ENCODE measurements at regions of chr15 and their contacts with region 1.

Region 1: GRCh38 chr15:62254137-62254934 is 89.3 kb upstream of the C2CD4B start:
- DNase-seq: peak; percentile 56 to 64
- ATAC-seq: peak; percentile 67 to 93
- H3K4me3 ChIP-seq: no peak overlapping the region
- H3K27ac ChIP-seq: no peak overlapping the region
- H3K4me1 ChIP-seq: no peaks in the 10 kb centered on the region
- CTCF ChIP-seq: peak; percentile 80
- EP300 ChIP-seq: no peak
- POLR2A ChIP-seq: no peak
- RAD21 ChIP-seq: peak; percentile 68 to 71

Region 2: DNA sequence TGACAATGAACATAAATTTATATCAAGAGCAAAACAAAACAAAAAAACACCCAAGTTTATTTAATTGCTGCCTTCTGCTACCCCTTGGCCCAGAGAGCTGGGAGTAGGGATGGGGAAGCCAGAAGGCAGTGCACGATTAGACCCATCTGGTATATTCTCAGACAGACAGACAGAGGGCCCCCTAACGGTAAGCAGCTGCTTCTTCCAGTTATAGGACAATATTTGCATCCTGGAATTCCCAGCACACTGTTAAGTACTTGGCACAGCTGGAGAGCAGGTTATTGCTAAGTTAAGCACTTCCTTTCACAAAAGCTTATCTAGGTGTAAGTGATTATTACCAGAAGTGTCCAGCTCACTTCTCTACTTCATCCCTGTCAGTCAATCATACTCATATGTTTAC is 128.6 kb before region 1 on chr15:
- CTCF ChIA-PET with region 1: interaction called, 10 read pairs
- POLR2A ChIA-PET with region 1: no interaction called
- DNase-seq: peak in 1 of 2 experiments; percentile 74
- ATAC-seq: peak; percentile 77 to 87
- H3K4me3 ChIP-seq: no peak overlapping the region
- H3K27ac ChIP-seq: peak overlapping the region in 1 of 2 experiments; percentile 67; a peak in 2 of 6 replicates
- H3K4me1 ChIP-seq: peaks cover 24% of the 10 kb centered on the region
- CTCF ChIP-seq: peak; percentile 39
- EP300 ChIP-seq: no peak
- POLR2A ChIP-seq: no peak
- RAD21 ChIP-seq: peak in 1 of 2 experiments; percentile 26; a peak in 2 of 5 replicates

Region 3: DNA sequence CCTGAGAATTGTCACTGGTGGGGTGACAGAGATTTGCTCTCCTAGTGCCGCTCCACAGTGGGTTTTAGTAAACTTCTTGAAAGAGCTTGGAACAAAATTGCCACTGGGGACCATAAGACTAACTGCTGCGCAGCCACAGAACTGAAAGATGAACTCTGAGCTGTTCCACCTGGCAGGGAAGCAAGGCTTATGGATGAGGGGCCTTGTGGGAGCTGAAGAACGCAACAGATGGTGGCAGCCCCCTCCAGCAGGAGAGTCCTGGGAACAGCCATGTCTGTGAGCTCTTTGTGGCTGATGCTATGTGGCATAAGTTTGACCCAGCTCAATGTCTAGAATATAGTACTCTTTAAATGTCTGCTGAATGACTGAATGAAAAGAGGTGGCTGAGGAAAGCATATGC is 22.5 kb before region 1 on chr15:
- CTCF ChIA-PET with region 1: interaction called, 11 read pairs
- POLR2A ChIA-PET with region 1: no interaction called
- DNase-seq: no peak
- ATAC-seq: no peak
- H3K4me3 ChIP-seq: no peak overlapping the region
- H3K27ac ChIP-seq: no peak overlapping the region
- H3K4me1 ChIP-seq: no peaks in the 10 kb centered on the region
- CTCF ChIP-seq: no peak
- EP300 ChIP-seq: no peak
- POLR2A ChIP-seq: no peak
- RAD21 ChIP-seq: no peak

Region 4: GRCh38 chr15:62241135-62241770 is 13.1 kb before region 1 on chr15:
- CTCF ChIA-PET with region 1: interaction called, 61 read pairs
- POLR2A ChIA-PET with region 1: no interaction called
- DNase-seq: peak; percentile 46 to 60
- ATAC-seq: peak; percentile 85 to 91
- H3K4me3 ChIP-seq: no peak overlapping the region
- H3K27ac ChIP-seq: no peak overlapping the region
- H3K4me1 ChIP-seq: no peaks in the 10 kb centered on the region
- CTCF ChIP-seq: peak; percentile 28
- EP300 ChIP-seq: no peak
- POLR2A ChIP-seq: no peak
- RAD21 ChIP-seq: peak in 1 of 2 experiments; percentile 27; a peak in 3 of 5 replicates

Region 5: GRCh38 chr15:62269504-62269903 is 15.2 kb after region 1 on chr15:
- CTCF ChIA-PET with region 1: interaction called, 17 read pairs
- POLR2A ChIA-PET with region 1: no interaction called
- DNase-seq: no peak
- ATAC-seq: no peak
- H3K4me3 ChIP-seq: no peak overlapping the region
- H3K27ac ChIP-seq: no peak overlapping the region
- H3K4me1 ChIP-seq: no peaks in the 10 kb centered on the region
- CTCF ChIP-seq: no peak
- EP300 ChIP-seq: no peak
- POLR2A ChIP-seq: no peak
- RAD21 ChIP-seq: no peak

Measured in A549 (cell line).